Aorta (tissue), 5 donors: ENCODE measurements at regions of chr20 and their contacts with region 1.

Region 1: DNA sequence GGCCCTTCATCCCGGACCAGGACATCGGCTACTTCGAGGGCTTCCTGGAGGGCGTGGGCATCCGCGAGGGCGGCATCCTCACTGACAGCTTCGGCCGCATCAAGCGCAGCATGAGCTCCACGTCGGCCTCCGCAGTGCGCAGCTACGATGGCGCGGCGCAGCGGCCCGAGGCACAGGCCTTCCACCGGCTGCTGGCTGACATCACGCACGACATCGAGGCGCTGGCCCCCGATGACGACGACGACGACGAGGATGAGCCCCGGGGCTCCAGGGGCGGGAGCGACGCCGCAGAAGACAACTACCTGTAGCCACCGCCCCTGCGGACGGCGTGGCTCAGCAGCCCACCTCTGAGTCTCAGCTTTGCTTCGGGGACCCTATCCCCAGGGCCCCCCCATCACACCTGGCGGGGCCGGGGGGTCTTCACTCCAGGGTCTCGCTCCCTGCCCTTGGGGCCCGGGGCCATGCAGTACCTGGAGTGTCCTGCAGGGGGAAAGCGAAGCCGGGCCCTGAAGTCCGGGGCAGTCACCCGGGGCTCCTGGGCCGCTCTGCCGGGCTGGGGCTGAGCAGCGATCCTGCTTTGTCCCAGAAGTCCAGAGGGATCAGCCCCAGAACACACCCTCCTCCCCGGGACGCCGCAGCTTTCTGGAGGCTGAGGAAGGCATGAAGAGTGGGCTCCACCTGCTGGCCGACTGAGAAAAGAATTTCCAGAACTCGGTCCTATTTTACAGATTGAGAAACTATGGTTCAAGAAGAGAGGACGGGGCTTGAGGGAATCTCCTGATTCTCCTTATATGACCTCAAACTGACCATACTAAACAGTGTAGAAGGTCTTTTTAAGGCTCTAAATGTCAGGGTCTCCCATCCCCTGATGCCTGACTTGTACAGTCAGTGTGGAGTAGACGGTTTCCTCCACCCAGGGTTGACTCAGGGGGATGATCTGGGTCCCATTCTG is 20.8 kb upstream of the HCK start:
- DNase-seq: peak; percentile 86 to 93
- ATAC-seq: peak; percentile 85
- H3K4me3 ChIP-seq: no peak overlapping the region
- H3K27ac ChIP-seq: no peak overlapping the region
- H3K4me1 ChIP-seq: no peaks in the 10 kb centered on the region
- H3K27me3 ChIP-seq: no peaks in the 10 kb centered on the region

Region 2: GRCh38 chr20:31795390-31795789 is 235.9 kb before region 1 on chr20:
- intact Hi-C with region 1: no loop called
- DNase-seq: no peak
- ATAC-seq: no peak
- H3K4me3 ChIP-seq: no peak overlapping the region
- H3K27ac ChIP-seq: no peak overlapping the region
- H3K4me1 ChIP-seq: no peaks in the 10 kb centered on the region
- H3K27me3 ChIP-seq: no peaks in the 10 kb centered on the region

Region 3: DNA sequence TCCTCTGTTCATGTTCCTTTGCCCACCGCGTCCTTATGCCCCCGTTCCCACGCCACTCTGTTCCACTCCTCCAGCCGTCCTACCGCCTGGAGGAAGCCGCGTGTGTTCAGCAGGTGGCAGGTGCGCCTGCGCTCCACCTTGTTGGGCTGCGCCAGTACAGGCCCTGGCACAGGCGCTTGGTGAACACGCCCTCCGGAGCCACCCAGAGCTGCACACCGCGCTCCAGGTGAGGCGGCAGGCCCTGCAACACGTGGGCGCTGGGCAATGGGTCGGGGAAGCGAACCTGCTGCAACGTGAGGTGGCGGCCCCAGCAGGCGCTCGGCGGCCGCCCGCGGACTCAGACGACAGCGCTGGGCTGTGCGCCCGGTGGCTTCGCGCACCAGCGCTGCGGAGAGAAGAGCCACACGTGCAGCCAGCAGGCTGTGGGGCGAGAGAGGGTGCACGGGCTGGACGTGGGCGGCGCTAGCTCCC is 181.8 kb before region 1 on chr20:
- intact Hi-C with region 1: loop called (anchors 5 to 10 kb)
- DNase-seq: no peak
- ATAC-seq: no peak
- H3K4me3 ChIP-seq: no peak overlapping the region
- H3K27ac ChIP-seq: no peak overlapping the region
- H3K4me1 ChIP-seq: no peaks in the 10 kb centered on the region
- H3K27me3 ChIP-seq: no peaks in the 10 kb centered on the region

Region 4: DNA sequence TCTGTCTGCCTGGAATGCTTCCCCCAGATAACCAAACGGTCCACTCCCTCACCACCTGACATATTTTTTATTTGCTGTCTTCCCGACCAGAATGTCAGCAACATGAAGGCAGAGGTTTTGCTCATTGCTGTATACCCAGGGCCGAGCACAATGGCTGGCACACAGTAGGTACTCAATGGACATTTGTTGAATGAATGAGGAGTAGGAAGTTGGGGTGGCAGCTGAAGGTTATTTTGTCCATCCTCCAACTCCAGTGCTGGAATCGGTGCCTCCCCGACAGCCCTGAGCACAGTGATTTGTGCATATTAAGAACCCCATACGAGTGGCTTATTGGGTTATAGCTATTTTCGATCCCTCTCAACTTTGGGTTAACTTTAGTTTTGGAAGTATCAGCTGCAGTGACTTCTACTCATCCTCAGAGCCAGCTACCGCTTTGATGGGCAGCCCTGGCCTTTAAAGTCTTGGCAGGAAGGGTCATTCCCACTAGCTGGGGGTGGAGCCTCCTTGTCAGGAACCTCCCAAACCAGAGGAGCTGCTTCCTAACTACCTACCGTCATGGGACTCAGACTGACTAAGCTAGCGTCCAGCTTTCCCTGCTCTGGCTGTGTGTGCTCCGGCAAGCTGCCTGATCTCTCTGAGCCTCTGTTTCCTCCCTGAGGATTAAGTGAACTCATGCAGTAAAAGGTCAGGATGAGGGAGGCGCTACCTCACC is 171.1 kb before region 1 on chr20:
- intact Hi-C with region 1: loop called in 1 of 2 experiments (anchors 10 kb)
- DNase-seq: peak; percentile 61 to 75
- ATAC-seq: no peak
- H3K4me3 ChIP-seq: no peak overlapping the region
- H3K27ac ChIP-seq: no peak overlapping the region
- H3K4me1 ChIP-seq: no peaks in the 10 kb centered on the region
- H3K27me3 ChIP-seq: no peaks in the 10 kb centered on the region

Region 5: GRCh38 chr20:32062776-32063170 is 31.5 kb after region 1 on chr20:
- intact Hi-C with region 1: no loop called
- DNase-seq: peak; percentile 78 to 89
- ATAC-seq: peak; percentile 70
- H3K4me3 ChIP-seq: no peak overlapping the region
- H3K27ac ChIP-seq: no peak overlapping the region
- H3K4me1 ChIP-seq: no peaks in the 10 kb centered on the region
- H3K27me3 ChIP-seq: no peaks in the 10 kb centered on the region

Region 6: GRCh38 chr20:32521780-32522525 is 490.7 kb after region 1 on chr20:
- intact Hi-C with region 1: no loop called
- DNase-seq: peak; percentile 75 to 87
- ATAC-seq: peak; percentile 77
- H3K4me3 ChIP-seq: no peak overlapping the region
- H3K27ac ChIP-seq: no peak overlapping the region
- H3K4me1 ChIP-seq: no peaks in the 10 kb centered on the region
- H3K27me3 ChIP-seq: no peaks in the 10 kb centered on the region